ENCODE measurements at regions of chr6 and their contacts with region 1.

Region 1: DNA sequence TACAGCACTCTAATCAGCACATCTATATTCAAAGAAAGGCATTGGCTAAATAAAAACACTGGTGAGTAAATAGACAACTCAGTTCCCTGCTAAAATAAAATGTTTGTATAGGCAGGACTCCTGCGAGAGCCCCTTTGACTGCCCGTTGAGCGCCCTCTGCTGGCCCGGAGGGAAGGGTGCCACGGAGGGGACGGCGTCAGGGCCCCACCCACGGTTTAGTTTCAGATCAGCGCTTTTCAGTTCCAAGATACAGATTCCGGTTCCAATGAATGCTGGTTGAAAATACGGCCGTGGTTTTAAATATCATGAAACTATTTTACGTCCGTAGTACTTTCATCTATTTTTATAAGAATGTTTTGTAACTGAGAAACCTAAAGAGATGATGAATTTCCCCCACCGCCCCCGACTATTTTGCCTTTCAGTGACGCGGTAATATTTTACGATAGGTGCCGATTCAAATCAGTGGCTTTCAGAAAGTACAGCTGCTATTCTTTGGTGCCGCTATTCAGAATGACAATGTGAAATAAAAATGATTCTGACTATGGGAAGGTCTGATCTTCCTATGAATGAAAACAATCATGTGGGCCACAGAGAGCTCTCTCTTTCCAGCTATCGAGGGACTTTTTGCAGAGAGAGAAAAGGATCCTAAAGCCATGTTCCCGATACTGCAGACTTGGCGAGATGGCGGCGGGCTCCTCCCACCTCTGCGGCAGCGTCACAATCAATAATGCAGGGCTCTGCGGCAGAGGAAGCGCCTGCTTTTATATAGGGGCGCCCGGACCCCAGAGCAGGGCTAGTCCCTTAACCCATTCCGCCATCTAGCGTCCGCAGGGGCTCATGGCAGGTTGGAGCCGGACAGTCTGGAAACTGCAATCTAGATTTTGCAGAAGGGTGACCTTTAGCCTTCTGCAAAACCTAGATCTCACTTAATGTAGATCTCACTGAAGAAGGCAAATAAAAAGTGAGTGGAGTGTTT is 10.6 kb upstream of the CCN6 start:
- DNase-seq: peak; percentile 95
- H3K4me3 ChIP-seq: peak overlapping the region; percentile 33 to 95 (median 89)
- H3K27ac ChIP-seq: peak overlapping the region; percentile 92
- H3K4me1 ChIP-seq: peaks cover 38% of the 10 kb centered on the region
- H3K27me3 ChIP-seq: no peaks in the 10 kb centered on the region
- CTCF ChIP-seq: peak; percentile 96 to 98
- POLR2A ChIP-seq: peak; percentile 54

Region 2: GRCh38 chr6:111011360-111012142 is 1031.8 kb before region 1 on chr6:
- CTCF ChIA-PET with region 1: interaction called, 7 read pairs
- POLR2A ChIA-PET with region 1: no interaction called
- dilution Hi-C with region 1: no loop called
- intact Hi-C with region 1: loop called (anchors 1 kb)
- DNase-seq: peak; percentile 57
- H3K4me3 ChIP-seq: no peak overlapping the region
- H3K27ac ChIP-seq: no peak overlapping the region
- H3K4me1 ChIP-seq: no peaks in the 10 kb centered on the region
- H3K27me3 ChIP-seq: no peaks in the 10 kb centered on the region
- CTCF ChIP-seq: peak; percentile 43 to 45
- POLR2A ChIP-seq: no peak

Region 3: GRCh38 chr6:111361648-111362047 is 681.7 kb before region 1 on chr6:
- CTCF ChIA-PET with region 1: interaction called, 5 read pairs
- POLR2A ChIA-PET with region 1: no interaction called
- dilution Hi-C with region 1: no loop called
- intact Hi-C with region 1: loop called (anchors 10 kb)
- DNase-seq: peak; percentile 46
- H3K4me3 ChIP-seq: no peak overlapping the region
- H3K27ac ChIP-seq: no peak overlapping the region
- H3K4me1 ChIP-seq: no peaks in the 10 kb centered on the region
- H3K27me3 ChIP-seq: no peaks in the 10 kb centered on the region
- CTCF ChIP-seq: peak; percentile 22 to 48
- POLR2A ChIP-seq: no peak

Region 4: GRCh38 chr6:111605100-111605751 is 438.1 kb before region 1 on chr6:
- CTCF ChIA-PET with region 1: no interaction called
- POLR2A ChIA-PET with region 1: no interaction called
- dilution Hi-C with region 1: no loop called
- intact Hi-C with region 1: loop called (anchors 2 kb)
- DNase-seq: peak; percentile 77
- H3K4me3 ChIP-seq: peak overlapping the region; percentile 37 to 44 (median 38)
- H3K27ac ChIP-seq: peak overlapping the region; percentile 92
- H3K4me1 ChIP-seq: peaks cover 59% of the 10 kb centered on the region
- H3K27me3 ChIP-seq: no peaks in the 10 kb centered on the region
- CTCF ChIP-seq: no peak
- POLR2A ChIP-seq: no peak

Region 5: GRCh38 chr6:111804627-111805235 is 238.6 kb before region 1 on chr6:
- CTCF ChIA-PET with region 1: interaction called, 10 read pairs
- POLR2A ChIA-PET with region 1: no interaction called
- dilution Hi-C with region 1: no loop called
- intact Hi-C with region 1: loop called (anchors 5 kb)
- DNase-seq: peak; percentile 81
- H3K4me3 ChIP-seq: no peak overlapping the region
- H3K27ac ChIP-seq: peak overlapping the region; percentile 56
- H3K4me1 ChIP-seq: peaks cover 39% of the 10 kb centered on the region
- H3K27me3 ChIP-seq: no peaks in the 10 kb centered on the region
- CTCF ChIP-seq: no peak
- POLR2A ChIP-seq: no peak

Region 6: DNA sequence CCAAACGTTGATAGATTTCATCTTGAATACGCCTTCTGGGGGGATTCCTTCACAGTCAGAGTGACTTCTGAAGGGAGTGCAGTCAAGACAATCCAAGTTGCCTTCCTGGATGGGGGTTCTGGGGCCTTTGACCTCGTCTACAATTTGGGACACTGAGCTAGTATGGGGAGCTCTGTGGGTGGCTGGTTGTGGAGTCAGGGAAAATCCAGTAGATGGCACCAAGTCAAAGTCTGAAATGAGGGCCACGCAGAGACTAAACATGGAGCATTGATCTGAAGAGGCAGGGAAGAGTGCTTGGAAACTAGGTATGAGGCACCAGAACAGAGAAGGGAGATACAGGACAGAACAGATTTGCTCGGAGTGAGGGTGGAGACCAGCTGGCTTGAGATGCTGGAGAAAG is 33.0 kb before region 1 on chr6:
- CTCF ChIA-PET with region 1: interaction called, 30 read pairs
- POLR2A ChIA-PET with region 1: no interaction called
- dilution Hi-C with region 1: no loop called
- intact Hi-C with region 1: no loop called
- DNase-seq: no peak
- H3K4me3 ChIP-seq: no peak overlapping the region
- H3K27ac ChIP-seq: no peak overlapping the region
- H3K4me1 ChIP-seq: peaks cover 9% of the 10 kb centered on the region
- H3K27me3 ChIP-seq: no peaks in the 10 kb centered on the region
- CTCF ChIP-seq: no peak
- POLR2A ChIP-seq: no peak

Region 7: DNA sequence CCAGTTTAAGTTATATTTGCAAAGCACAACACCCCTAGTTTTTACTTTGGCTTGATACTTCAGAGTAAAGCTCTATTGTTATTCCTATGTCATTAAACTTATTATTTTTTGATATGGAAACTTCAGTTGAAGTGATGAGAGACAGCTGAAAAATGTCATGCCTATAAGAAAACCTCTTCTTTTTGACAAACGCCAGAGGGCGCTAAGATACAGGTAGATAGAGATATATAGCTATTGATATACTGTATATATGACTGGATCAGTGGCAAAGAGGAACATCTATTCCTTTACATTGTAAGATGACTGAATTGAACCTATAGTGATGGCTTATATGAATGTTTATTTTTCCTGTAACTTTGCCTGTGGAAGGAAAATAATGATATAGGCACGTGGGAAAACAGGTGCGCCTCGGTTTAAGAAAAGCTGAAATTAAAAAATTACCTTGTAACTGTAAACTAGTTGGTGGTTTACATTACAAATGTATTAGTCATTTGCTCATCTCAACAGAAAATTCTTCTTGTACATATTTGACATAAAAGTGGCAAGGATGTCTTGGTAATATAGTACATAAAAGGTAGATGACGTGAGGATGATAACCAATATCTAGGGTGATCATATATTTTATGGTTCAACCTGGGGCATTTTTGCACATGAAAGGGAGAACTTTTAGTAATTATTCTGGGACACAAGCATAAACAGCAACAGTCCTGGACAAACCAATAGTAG is 136.9 kb after region 1 on chr6:
- CTCF ChIA-PET with region 1: no interaction called
- POLR2A ChIA-PET with region 1: no interaction called
- dilution Hi-C with region 1: no loop called
- intact Hi-C with region 1: no loop called
- DNase-seq: peak; percentile 71
- H3K4me3 ChIP-seq: no peak overlapping the region
- H3K27ac ChIP-seq: no peak overlapping the region
- H3K4me1 ChIP-seq: peaks cover 11% of the 10 kb centered on the region
- H3K27me3 ChIP-seq: no peaks in the 10 kb centered on the region
- CTCF ChIP-seq: peak; percentile 28 to 46
- POLR2A ChIP-seq: no peak

Measured in endothelial cell of umbilical vein (primary cell).